Ovary (tissue), 10 donors: ENCODE measurements at regions of chr15 and their contacts with region 1.

Region 1: GRCh38 chr15:96870580-96870979 is 540.1 kb downstream of the NR2F2 start:
- DNase-seq: no peak
- H3K4me3 ChIP-seq: no peak overlapping the region
- H3K27ac ChIP-seq: no peak overlapping the region
- H3K4me1 ChIP-seq: no peaks in the 10 kb centered on the region
- H3K27me3 ChIP-seq: no peaks in the 10 kb centered on the region
- CTCF ChIP-seq: no peak
- EP300 ChIP-seq: no peak
- POLR2A ChIP-seq: no peak

Region 2: DNA sequence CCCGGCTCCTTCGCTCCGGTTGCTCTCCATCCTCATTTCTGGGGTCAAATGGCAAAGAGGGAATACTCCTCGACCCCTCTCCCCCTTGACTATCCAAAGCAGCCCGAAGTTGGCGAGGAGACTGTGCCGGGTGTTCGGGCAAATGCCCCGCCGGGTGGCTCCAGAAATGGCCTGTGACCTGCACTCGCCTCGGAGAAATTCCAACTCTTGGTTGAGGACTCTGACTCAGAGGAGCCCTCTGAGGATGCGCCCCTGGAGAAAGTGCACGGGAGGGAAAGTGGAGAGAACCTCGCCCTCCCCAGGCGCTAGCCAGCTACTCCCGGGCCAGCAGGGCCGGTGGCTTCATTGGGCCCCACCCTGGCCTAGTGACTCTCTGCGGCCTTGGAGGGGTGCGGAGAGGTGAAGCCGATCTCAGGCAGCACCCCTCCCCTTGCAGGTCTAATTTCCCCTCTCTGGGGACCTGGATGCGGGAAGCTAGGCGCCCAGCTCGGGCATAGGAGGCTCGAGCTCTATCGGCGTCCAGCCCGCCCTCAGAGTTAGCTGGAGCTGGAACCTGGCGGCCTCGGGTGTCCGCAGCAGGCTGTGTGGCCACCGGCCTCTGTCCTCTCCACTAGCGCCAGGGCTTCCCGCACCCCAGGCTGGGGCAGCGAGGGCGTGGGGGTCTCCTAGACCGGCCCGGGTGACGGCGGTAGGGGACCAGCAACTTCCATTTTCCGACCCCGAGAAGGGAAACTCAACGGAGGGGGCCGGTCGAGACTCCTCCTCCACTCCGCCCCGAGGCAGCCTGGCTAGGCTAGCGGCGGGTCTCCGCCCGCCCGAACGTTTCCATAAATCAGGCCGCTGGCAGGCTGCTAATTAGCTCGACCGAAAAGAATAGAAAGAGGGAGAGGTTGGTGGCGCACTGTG is 510.7 kb before region 1 on chr15:
- intact Hi-C with region 1: loop called in 1 of 4 experiments (anchors 10 kb)
- DNase-seq: peak; percentile 61 to 75 (median 72)
- H3K4me3 ChIP-seq: peak overlapping the region; percentile 56
- H3K27ac ChIP-seq: peak overlapping the region; percentile 54 to 86
- H3K4me1 ChIP-seq: peaks cover 20% of the 10 kb centered on the region
- H3K27me3 ChIP-seq: no peaks in the 10 kb centered on the region
- CTCF ChIP-seq: peak in 1 of 3 donors; percentile 18
- EP300 ChIP-seq: no peak
- POLR2A ChIP-seq: peak; percentile 34

Region 3: DNA sequence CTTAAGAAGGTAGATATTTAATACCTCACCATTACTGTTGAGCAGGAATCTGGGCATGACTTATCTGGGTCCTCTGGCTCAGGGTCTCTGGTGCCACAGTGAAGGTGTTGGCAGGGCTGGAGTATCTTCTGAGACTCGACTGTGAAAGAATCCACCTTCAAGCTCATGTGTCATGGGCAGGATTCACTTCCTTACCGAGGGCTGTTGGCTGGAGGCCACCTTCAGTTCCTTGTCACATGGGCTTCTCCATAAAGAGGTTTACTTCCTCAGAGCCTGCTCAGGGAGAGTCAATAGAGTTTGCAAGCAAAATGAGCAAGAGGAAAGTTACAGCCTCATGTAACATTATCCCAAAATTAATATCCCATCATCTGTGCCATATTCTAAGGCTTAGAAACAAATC is 80.6 kb before region 1 on chr15:
- intact Hi-C with region 1: no loop called
- DNase-seq: no peak
- H3K4me3 ChIP-seq: no peak overlapping the region
- H3K27ac ChIP-seq: no peak overlapping the region
- H3K4me1 ChIP-seq: no peaks in the 10 kb centered on the region
- H3K27me3 ChIP-seq: no peaks in the 10 kb centered on the region
- CTCF ChIP-seq: no peak
- EP300 ChIP-seq: no peak
- POLR2A ChIP-seq: no peak

Region 4: DNA sequence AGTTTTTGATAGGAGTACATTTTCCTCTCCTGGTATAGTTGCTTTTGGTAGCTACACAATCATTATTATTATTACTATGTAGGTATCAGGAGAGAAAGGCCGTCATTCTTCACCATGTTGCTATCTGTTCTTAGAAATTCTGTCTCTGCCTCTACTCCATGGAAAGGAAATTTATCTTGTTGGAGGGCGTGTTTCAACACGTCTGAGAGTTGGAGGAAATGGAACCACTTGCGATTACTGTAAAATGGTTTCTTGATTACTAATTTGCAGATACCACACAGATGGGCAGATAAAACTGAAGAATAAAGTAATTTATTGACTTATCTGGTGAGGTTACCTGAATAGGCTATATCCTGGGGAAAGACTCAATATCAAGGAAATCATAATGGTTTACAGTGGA is 51.7 kb before region 1 on chr15:
- intact Hi-C with region 1: no loop called
- DNase-seq: no peak
- H3K4me3 ChIP-seq: no peak overlapping the region
- H3K27ac ChIP-seq: no peak overlapping the region
- H3K4me1 ChIP-seq: no peaks in the 10 kb centered on the region
- H3K27me3 ChIP-seq: no peaks in the 10 kb centered on the region
- CTCF ChIP-seq: no peak
- EP300 ChIP-seq: no peak
- POLR2A ChIP-seq: no peak

Region 5: GRCh38 chr15:96932620-96933019 is 62.0 kb after region 1 on chr15:
- intact Hi-C with region 1: loop called in 1 of 4 experiments (anchors 10 kb)
- DNase-seq: no peak
- H3K4me3 ChIP-seq: no peak overlapping the region
- H3K27ac ChIP-seq: no peak overlapping the region
- H3K4me1 ChIP-seq: no peaks in the 10 kb centered on the region
- H3K27me3 ChIP-seq: no peaks in the 10 kb centered on the region
- CTCF ChIP-seq: no peak
- EP300 ChIP-seq: no peak
- POLR2A ChIP-seq: no peak